ENCODE measurements at regions of chr1 and their contacts with region 1.

Region 1: DNA sequence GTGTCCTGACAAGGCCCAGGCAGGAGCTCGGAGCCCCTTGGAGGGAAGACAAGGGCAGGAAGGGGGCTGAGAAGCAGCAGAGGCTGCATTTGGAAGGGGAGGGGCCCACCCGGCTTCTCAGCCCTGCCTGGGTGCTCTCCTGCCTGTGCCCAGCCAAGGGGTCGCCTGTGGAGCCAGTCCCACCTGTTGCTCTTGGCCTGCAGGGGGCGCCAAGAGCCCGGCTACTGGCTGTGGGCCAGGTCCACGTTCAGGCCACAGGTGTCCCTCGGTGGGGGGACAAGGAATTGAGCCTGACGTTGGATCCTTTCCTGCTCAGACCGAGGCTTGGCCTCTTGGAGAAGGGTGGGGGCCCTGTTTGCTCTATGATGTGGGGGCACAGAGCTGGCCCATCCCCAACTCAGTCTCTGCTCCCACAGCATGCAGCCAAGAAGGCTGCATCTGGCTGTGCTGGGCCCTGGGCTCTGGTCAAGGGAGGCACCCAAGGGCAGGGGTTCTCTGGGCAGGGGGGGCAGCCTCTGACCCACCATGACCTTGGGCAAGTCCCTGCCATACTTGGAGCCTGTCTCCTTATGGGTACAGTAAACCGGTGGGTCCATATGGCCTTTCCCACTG is 10.9 kb downstream of the WNT4 start:
- DNase-seq: no peak
- H3K4me3 ChIP-seq: no peak overlapping the region
- H3K27ac ChIP-seq: no peak overlapping the region
- H3K4me1 ChIP-seq: peaks cover 0 to 6% of the 10 kb centered on the region in 2 donors
- H3K27me3 ChIP-seq: no peaks in the 10 kb centered on the region
- CTCF ChIP-seq: peak; percentile 16 to 49 (median 30)

Region 2: GRCh38 chr1:22105611-22106207 is 26.3 kb before region 1 on chr1:
- intact Hi-C with region 1: loop called (anchors 1 kb)
- DNase-seq: no peak
- H3K4me3 ChIP-seq: no peak overlapping the region
- H3K27ac ChIP-seq: no peak overlapping the region
- H3K4me1 ChIP-seq: peaks cover 0 to under 1% of the 10 kb centered on the region in 2 donors
- H3K27me3 ChIP-seq: no peaks in the 10 kb centered on the region
- CTCF ChIP-seq: peak; percentile 43 to 74 (median 68)

Measured in ascending aorta (tissue), 2 donors.